ENCODE measurements at regions of chr1 and their contacts with region 1.

Region 1: GRCh38 chr1:47663286-47663685 is 225.4 kb downstream of the FOXD2 start:
- DNase-seq: no peak
- H3K4me3 ChIP-seq: no peak overlapping the region
- H3K27ac ChIP-seq: no peak overlapping the region
- H3K4me1 ChIP-seq: no peaks in the 10 kb centered on the region
- H3K27me3 ChIP-seq: peaks cover 4 to 19% (median 12%) of the 10 kb centered on the region in 4 experiments
- CTCF ChIP-seq: no peak
- EP300 ChIP-seq: no peak
- POLR2A ChIP-seq: no peak
- RAD21 ChIP-seq: no peak

Region 2: GRCh38 chr1:47710329-47711071 is 47.2 kb after region 1 on chr1:
- CTCF ChIA-PET with region 1: interaction called, 14 read pairs
- POLR2A ChIA-PET with region 1: no interaction called
- DNase-seq: peak in 1 of 2 experiments; percentile 97
- H3K4me3 ChIP-seq: peak overlapping the region; percentile 20 to 63 (median 47); a peak in 4 of 8 replicates
- H3K27ac ChIP-seq: no peak overlapping the region
- H3K4me1 ChIP-seq: peaks cover 0 to 19% (median 5%) of the 10 kb centered on the region in 4 experiments; a peak in 3 of 7 replicates
- H3K27me3 ChIP-seq: peaks cover 44 to 74% (median 71%) of the 10 kb centered on the region in 4 experiments
- CTCF ChIP-seq: peak; percentile 93 to 97 (median 97)
- EP300 ChIP-seq: no peak
- POLR2A ChIP-seq: no peak
- RAD21 ChIP-seq: peak; percentile 93 to 96